ENCODE measurements at regions of chr18 and their contacts with region 1.

Region 1: GRCh38 chr18:39389800-39390379 is 1824.3 kb upstream of the CELF4 start:
- DNase-seq: no peak
- ATAC-seq: no peak
- H3K4me3 ChIP-seq: no peak overlapping the region
- H3K4me3 Mint-ChIP-seq: no peak overlapping the region
- H3K27ac ChIP-seq: no peak overlapping the region
- H3K27ac Mint-ChIP-seq: no peak overlapping the region
- H3K4me1 ChIP-seq: no peaks in the 10 kb centered on the region
- H3K4me1 Mint-ChIP-seq: no peaks in the 10 kb centered on the region
- H3K27me3 ChIP-seq: no peaks in the 10 kb centered on the region
- H3K27me3 Mint-ChIP-seq: no peaks in the 10 kb centered on the region

Region 2: GRCh38 chr18:39329496-39330275 is 60.2 kb before region 1 on chr18:
- CTCF ChIA-PET with region 1: no interaction called
- POLR2A ChIA-PET with region 1: no interaction called
- intact Hi-C with region 1: loop called in 1 of 2 experiments (anchors 10 kb)
- DNase-seq: no peak
- ATAC-seq: no peak
- H3K4me3 ChIP-seq: no peak overlapping the region
- H3K4me3 Mint-ChIP-seq: no peak overlapping the region
- H3K27ac ChIP-seq: no peak overlapping the region
- H3K27ac Mint-ChIP-seq: no peak overlapping the region
- H3K4me1 ChIP-seq: no peaks in the 10 kb centered on the region
- H3K4me1 Mint-ChIP-seq: no peaks in the 10 kb centered on the region
- H3K27me3 ChIP-seq: no peaks in the 10 kb centered on the region
- H3K27me3 Mint-ChIP-seq: no peaks in the 10 kb centered on the region

Measured in naive thymus-derived CD4-positive, alpha-beta T cell (primary cell).